Activated CD4-positive, alpha-beta T cell treated with anti-CD3 and anti-CD28 coated beads for 36 hours (primary cell): ENCODE measurements at regions of chr3 and their contacts with region 1.

Region 1: DNA sequence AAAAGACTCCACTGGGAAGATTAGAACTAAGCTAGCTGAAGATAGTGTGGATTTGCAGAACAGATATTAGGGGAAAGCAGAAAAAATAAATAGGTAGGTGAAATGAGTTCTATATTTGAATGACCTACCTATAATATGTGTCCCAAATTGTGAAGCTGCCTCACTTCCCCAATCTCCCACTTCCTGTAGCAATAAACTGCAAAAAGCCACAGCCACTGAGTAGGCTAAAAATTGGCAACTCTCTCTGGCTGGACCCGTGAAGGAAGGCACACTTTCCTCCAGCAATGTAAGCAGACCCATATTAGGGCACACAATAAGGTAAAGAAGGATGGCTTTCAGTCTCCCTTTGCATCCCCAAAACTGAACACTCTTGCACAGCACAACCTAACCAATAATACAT is 43.7 kb upstream of the NECTIN3 start:
- DNase-seq: no peak
- ATAC-seq: no peak
- H3K4me3 Mint-ChIP-seq: no peak overlapping the region
- H3K27ac Mint-ChIP-seq: no peak overlapping the region
- H3K4me1 Mint-ChIP-seq: no peaks in the 10 kb centered on the region
- H3K27me3 Mint-ChIP-seq: peaks cover 6% of the 10 kb centered on the region

Region 2: DNA sequence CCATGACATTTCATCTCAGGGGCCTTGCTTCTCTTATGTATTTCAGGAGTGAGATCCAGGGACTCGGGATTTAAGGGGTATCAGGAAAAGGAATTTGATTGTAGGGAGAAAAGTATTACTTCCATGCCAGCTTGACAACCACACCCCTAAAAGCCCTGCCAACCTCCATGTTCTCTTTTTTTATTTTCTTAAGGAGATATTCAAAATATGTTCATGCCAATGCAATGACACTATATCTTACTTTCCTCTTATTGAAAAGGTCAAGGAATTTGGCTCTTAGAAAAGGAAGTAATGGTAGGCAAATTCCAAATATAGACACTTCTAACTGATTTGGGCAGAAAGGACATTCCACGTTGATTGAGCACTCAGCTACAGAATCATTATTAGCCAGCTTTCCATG is 363.7 kb before region 1 on chr3:
- CTCF ChIA-PET with region 1: no interaction called
- POLR2A ChIA-PET with region 1: no interaction called
- intact Hi-C with region 1: no loop called
- DNase-seq: no peak
- ATAC-seq: no peak
- H3K4me3 Mint-ChIP-seq: no peak overlapping the region
- H3K27ac Mint-ChIP-seq: no peak overlapping the region
- H3K4me1 Mint-ChIP-seq: no peaks in the 10 kb centered on the region
- H3K27me3 Mint-ChIP-seq: no peaks in the 10 kb centered on the region

Region 3: GRCh38 chr3:111012388-111013248 is 15.2 kb before region 1 on chr3:
- CTCF ChIA-PET with region 1: no interaction called
- POLR2A ChIA-PET with region 1: no interaction called
- intact Hi-C with region 1: loop called in 1 of 2 experiments (anchors 1 kb)
- DNase-seq: peak; percentile 25
- ATAC-seq: no peak
- H3K4me3 Mint-ChIP-seq: no peak overlapping the region
- H3K27ac Mint-ChIP-seq: no peak overlapping the region
- H3K4me1 Mint-ChIP-seq: no peaks in the 10 kb centered on the region
- H3K27me3 Mint-ChIP-seq: peaks cover 2% of the 10 kb centered on the region

Region 4: DNA sequence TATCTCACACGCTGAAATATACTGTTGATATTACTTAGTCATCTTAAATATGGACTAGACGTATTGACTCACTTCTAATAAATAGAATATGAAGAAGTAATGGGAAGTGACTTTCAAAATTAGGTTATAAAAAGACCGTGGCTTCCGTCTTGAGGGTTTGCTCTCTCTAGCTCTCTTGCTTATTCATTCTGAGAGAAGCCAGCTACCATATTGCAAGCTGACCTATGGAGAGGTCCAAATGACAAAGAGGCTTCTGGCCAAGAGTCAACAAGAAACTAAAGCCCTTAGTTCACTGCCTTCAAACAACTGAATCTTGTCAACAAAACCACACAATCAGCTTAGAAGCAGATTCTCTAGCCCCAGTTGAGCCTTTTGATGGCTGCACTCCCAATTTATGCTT is 1220.0 kb after region 1 on chr3:
- CTCF ChIA-PET with region 1: no interaction called
- POLR2A ChIA-PET with region 1: no interaction called
- intact Hi-C with region 1: no loop called
- DNase-seq: no peak
- ATAC-seq: no peak
- H3K4me3 Mint-ChIP-seq: no peak overlapping the region
- H3K27ac Mint-ChIP-seq: no peak overlapping the region
- H3K4me1 Mint-ChIP-seq: no peaks in the 10 kb centered on the region
- H3K27me3 Mint-ChIP-seq: peaks cover 2% of the 10 kb centered on the region